Activated naive CD4-positive, alpha-beta T cell treated with anti-CD3 and anti-CD28 coated beads, Interleukin-2, amount 10 ng/mL, durations not matched to agents 7 days and 5 days (primary cell): ENCODE measurements at regions of chr3 and their contacts with region 1.

Region 1: DNA sequence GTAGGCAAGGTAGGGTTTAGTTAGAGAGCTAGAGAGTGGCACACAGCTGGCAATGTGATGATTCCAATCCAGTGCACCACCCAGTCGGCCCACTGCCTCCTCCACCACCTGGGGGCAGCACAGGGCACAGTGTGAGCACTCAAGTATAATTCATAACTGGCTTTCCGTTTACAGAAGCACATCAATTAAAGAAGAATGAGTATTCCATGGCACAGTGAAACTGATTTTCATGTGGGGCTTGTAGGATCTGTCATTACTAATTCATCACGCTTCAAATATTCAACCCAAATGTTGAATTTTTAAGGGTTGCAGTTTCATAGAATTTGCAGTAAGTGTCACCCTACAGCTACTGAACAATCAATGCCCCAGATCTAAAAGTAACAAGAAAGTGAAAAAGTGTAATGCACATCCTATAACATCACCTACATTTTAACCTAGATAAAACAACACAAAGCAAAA is 149.9 kb downstream of the IGSF11 start:
- DNase-seq: peak; percentile 85
- H3K4me3 Mint-ChIP-seq: no peak overlapping the region
- H3K27ac Mint-ChIP-seq: no peak overlapping the region
- H3K4me1 Mint-ChIP-seq: peaks cover 11% of the 10 kb centered on the region
- H3K27me3 Mint-ChIP-seq: peaks cover 23% of the 10 kb centered on the region

Region 2: DNA sequence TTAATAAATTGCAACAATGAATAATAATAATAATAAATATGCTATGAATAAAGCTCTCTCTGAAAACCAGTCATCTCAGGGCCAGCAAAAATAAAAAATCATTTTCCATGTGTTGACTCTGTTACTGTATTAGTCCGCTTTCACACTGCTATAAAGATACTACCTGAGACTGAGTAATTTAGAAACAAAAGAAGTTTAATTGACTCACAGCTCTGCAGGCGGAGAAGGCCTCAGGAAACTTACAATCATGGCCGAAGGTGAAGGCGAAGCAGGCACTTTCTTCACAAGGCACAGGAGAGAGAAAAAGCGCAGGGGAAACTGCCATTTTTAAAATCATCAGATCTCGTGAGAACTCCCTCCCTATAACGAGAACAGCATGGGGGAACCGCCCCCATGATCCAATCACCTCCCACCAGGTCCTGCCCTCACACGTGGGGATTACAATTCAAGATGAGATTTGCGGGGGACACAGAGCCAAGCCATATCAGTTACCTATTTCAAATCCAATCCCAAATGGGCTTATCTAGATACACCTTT is 74.2 kb before region 1 on chr3:
- CTCF ChIA-PET with region 1: no interaction called
- DNase-seq: no peak
- H3K4me3 Mint-ChIP-seq: no peak overlapping the region
- H3K27ac Mint-ChIP-seq: no peak overlapping the region
- H3K4me1 Mint-ChIP-seq: no peaks in the 10 kb centered on the region
- H3K27me3 Mint-ChIP-seq: no peaks in the 10 kb centered on the region

Region 3: GRCh38 chr3:118827446-118827845 is 57.3 kb before region 1 on chr3:
- CTCF ChIA-PET with region 1: no interaction called
- DNase-seq: no peak
- H3K4me3 Mint-ChIP-seq: no peak overlapping the region
- H3K27ac Mint-ChIP-seq: no peak overlapping the region
- H3K4me1 Mint-ChIP-seq: no peaks in the 10 kb centered on the region
- H3K27me3 Mint-ChIP-seq: peaks cover 5% of the 10 kb centered on the region

Region 4: DNA sequence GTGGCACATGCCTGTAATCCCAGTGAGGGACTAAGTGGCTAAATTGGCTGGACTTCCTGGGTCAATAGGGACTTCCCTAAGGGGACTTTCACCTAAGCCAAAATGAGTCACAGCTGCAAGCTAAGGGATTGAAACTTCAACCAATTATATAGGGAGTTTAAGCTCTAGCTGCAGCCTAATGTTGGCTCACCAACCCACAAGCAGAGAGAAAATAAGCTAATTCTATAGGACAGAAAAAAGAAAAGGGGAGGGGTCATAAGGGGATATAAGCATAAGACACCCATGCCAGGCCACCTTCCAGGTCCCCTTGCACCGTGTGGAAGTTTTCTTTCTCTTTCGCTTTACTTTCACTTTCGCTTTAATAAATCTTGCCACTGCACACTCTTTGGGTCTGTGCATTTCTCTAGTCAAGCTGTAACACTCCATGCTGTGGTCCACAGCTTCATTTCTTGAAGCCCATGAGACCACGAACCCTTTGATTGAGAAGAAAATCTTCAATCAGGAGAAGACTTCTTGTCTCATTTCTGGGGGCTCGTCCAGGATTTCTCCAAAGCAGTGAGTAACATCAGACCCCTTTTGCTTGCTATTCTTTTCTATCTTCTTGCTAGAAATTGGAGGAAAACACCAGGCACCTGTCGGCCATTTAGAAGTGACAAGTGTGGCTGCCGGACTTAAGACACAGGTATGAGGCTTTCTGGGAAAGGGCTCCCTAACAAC is 42.5 kb before region 1 on chr3:
- CTCF ChIA-PET with region 1: no interaction called
- DNase-seq: no peak
- H3K4me3 Mint-ChIP-seq: no peak overlapping the region
- H3K27ac Mint-ChIP-seq: no peak overlapping the region
- H3K4me1 Mint-ChIP-seq: no peaks in the 10 kb centered on the region
- H3K27me3 Mint-ChIP-seq: no peaks in the 10 kb centered on the region

Region 5: DNA sequence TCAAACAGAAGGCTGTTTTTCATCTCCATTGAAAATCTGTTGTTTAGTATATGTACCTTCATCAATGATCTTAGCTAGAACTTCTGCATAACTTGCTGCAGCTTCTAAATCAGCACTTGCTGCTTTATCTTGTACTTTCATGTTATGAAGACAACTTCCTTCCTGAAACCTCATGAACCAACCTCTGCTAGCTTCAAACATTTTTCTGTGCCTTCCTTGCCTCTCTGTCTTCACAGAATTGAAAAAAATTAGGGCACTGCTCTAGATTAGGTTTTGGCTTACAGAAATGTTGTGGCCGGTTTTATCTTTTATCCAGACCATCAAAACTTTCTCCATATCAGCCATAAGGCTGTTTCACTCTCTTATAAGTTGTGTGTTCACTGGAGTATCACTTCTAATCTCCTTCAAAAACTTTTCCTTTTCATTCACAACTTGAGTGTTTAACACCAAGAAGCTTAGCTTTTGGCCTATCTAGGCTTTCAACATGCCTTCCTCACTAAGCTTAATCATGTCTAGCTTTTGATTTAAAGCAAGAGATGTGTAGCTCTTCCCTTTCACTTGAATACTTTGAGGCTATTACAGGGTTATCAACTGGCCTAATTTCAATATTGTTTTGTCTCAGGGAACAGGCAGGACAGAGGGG is 71.3 kb after region 1 on chr3:
- CTCF ChIA-PET with region 1: interaction called, 13 read pairs
- DNase-seq: peak; percentile 21
- H3K4me3 Mint-ChIP-seq: peak overlapping the region; percentile 7
- H3K27ac Mint-ChIP-seq: peak overlapping the region; percentile 95
- H3K4me1 Mint-ChIP-seq: peaks cover 48% of the 10 kb centered on the region
- H3K27me3 Mint-ChIP-seq: no peaks in the 10 kb centered on the region

Region 6: GRCh38 chr3:119025171-119025795 is 140.5 kb after region 1 on chr3:
- CTCF ChIA-PET with region 1: interaction called, 11 read pairs
- DNase-seq: no peak
- H3K4me3 Mint-ChIP-seq: no peak overlapping the region
- H3K27ac Mint-ChIP-seq: no peak overlapping the region
- H3K4me1 Mint-ChIP-seq: peaks cover under 1% of the 10 kb centered on the region
- H3K27me3 Mint-ChIP-seq: no peaks in the 10 kb centered on the region

Region 7: DNA sequence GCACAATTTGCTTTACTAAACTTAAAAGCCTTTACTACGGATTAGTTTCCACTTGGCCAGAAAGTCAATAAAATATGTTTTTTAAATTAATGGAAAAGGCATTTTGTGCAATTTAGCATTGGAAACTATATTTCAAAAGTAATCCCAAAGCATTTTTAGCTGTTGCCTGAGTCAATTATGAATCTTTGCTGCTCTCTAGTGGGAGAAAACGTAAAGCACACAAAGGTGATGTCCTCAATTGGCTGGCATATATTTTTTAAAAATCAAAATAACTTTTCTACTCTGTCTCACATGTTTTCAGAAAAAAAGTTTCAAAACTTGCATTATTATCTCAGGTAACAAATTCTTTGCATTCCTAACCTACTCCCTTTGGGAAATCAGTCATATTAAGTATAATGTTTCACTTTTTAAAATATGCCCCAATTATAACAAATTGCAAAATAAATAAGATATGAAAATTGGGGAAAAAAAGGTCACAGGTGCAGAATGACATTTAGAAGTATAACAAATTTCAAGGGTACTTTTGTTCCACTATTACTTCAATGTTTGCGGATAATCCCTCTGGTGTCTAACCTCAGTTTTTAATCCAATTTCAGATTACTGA is 213.9 kb after region 1 on chr3:
- CTCF ChIA-PET with region 1: interaction called, 259 read pairs
- DNase-seq: no peak
- H3K4me3 Mint-ChIP-seq: no peak overlapping the region
- H3K27ac Mint-ChIP-seq: no peak overlapping the region
- H3K4me1 Mint-ChIP-seq: no peaks in the 10 kb centered on the region
- H3K27me3 Mint-ChIP-seq: peaks cover 5% of the 10 kb centered on the region

Region 8: DNA sequence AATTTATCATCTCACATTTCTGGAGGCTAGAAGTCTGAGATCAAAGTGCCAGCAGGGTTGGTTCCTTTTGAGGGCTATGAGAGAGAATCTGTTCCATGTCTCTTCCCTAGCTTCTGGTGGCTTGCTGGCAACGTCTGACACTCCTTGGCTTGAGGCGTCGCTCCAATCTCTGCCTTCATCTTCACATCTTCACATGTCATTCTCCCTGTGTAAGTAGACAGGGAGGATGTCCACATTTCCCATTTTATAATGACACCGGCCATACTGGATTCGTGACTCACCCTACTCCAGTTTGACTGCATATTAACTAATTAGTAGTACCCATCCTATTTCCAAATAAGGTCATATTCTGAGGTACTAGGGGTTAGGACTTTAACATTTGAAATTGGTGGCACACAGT is 391.9 kb after region 1 on chr3:
- CTCF ChIA-PET with region 1: no interaction called
- DNase-seq: no peak
- H3K4me3 Mint-ChIP-seq: no peak overlapping the region
- H3K27ac Mint-ChIP-seq: no peak overlapping the region
- H3K4me1 Mint-ChIP-seq: no peaks in the 10 kb centered on the region
- H3K27me3 Mint-ChIP-seq: peaks cover 6% of the 10 kb centered on the region

Region 9: GRCh38 chr3:119352849-119353502 is 468.2 kb after region 1 on chr3:
- CTCF ChIA-PET with region 1: interaction called, 18 read pairs
- DNase-seq: no peak
- H3K4me3 Mint-ChIP-seq: no peak overlapping the region
- H3K27ac Mint-ChIP-seq: peak overlapping the region; percentile 70
- H3K4me1 Mint-ChIP-seq: peaks cover 29% of the 10 kb centered on the region
- H3K27me3 Mint-ChIP-seq: peaks cover 16% of the 10 kb centered on the region